T-cell (primary cell): ENCODE measurements at regions of chr3 and their contacts with region 1.

Region 1: DNA sequence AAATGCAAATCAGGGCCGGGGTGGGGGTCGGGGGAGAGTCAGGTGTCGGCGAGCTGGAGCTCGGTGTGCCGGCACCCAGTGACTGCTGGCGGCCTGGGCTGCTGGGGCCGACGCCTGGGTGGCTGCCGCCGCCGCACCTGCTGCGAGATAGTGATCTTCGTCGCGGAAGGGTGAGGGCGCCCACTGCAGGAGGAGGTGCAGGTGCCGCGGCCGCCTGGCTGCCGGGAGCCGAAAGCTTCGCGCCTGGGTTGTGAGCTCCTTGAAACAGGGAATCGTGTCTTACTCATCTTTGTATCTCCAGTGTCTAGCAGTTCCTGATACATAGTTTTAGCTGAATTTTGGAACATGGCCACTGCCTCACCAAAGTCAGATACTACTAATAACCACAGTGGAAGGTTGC is 64.0 kb upstream of the CPOX start:
- DNase-seq: peak in 30 of 35 experiments; percentile 6 to 51 (median 24)
- ATAC-seq: peak; percentile 50 to 92 (median 66)
- H3K4me3 ChIP-seq: no peak overlapping the region
- H3K4me3 Mint-ChIP-seq: peak overlapping the region in 1 of 3 donors; percentile 53
- H3K27ac ChIP-seq: no peak overlapping the region
- H3K27ac Mint-ChIP-seq: no peak overlapping the region
- H3K4me1 ChIP-seq: peaks cover 0 to 3% of the 10 kb centered on the region in 2 experiments
- H3K4me1 Mint-ChIP-seq: peaks cover 3 to 8% (median 5%) of the 10 kb centered on the region in 3 donors
- H3K27me3 ChIP-seq: peaks cover 0 to 6% of the 10 kb centered on the region in 2 experiments
- H3K27me3 Mint-ChIP-seq: peaks cover 17 to 22% of the 10 kb centered on the region in 2 donors

Region 2: GRCh38 chr3:96705895-96706294 is 1951.6 kb before region 1 on chr3:
- CTCF ChIA-PET with region 1: no interaction called
- POLR2A ChIA-PET with region 1: no interaction called
- DNase-seq: no peak
- ATAC-seq: no peak
- H3K4me3 ChIP-seq: no peak overlapping the region
- H3K4me3 Mint-ChIP-seq: no peak overlapping the region
- H3K27ac ChIP-seq: no peak overlapping the region
- H3K27ac Mint-ChIP-seq: no peak overlapping the region
- H3K4me1 ChIP-seq: no peaks in the 10 kb centered on the region
- H3K4me1 Mint-ChIP-seq: no peaks in the 10 kb centered on the region
- H3K27me3 ChIP-seq: no peaks in the 10 kb centered on the region
- H3K27me3 Mint-ChIP-seq: no peaks in the 10 kb centered on the region

Region 3: GRCh38 chr3:98291332-98291957 is 366.0 kb before region 1 on chr3:
- CTCF ChIA-PET with region 1: no interaction called
- POLR2A ChIA-PET with region 1: no interaction called
- DNase-seq: no peak
- ATAC-seq: no peak
- H3K4me3 ChIP-seq: no peak overlapping the region
- H3K4me3 Mint-ChIP-seq: no peak overlapping the region
- H3K27ac ChIP-seq: no peak overlapping the region
- H3K27ac Mint-ChIP-seq: no peak overlapping the region
- H3K4me1 ChIP-seq: no peaks in the 10 kb centered on the region
- H3K4me1 Mint-ChIP-seq: no peaks in the 10 kb centered on the region
- H3K27me3 ChIP-seq: peaks cover 0 to 15% of the 10 kb centered on the region in 2 experiments
- H3K27me3 Mint-ChIP-seq: peaks cover 13 to 20% of the 10 kb centered on the region in 2 donors

Region 4: GRCh38 chr3:98593046-98593936 is 64.2 kb before region 1 on chr3 and contains the start of gene CPOX:
- CTCF ChIA-PET with region 1: interaction called in 1 of 2 experiments, 12 read pairs
- POLR2A ChIA-PET with region 1: no interaction called
- DNase-seq: peak; percentile 59 to 85 (median 75)
- ATAC-seq: peak; percentile 95 to 98 (median 96)
- H3K4me3 ChIP-seq: peak within 1 kb of the TSS; percentile 61 to 84
- H3K4me3 Mint-ChIP-seq: peak within 1 kb of the TSS; percentile 93 to 96 (median 93)
- H3K27ac ChIP-seq: peak within 1 kb of the TSS; percentile 60
- H3K27ac Mint-ChIP-seq: peak within 1 kb of the TSS; percentile 93 to 95
- H3K4me1 ChIP-seq: peaks cover 15 to 17% of the 10 kb centered on the region in 2 experiments
- H3K4me1 Mint-ChIP-seq: peaks cover 32 to 43% (median 38%) of the 10 kb centered on the region in 3 donors
- H3K27me3 ChIP-seq: no peaks in the 10 kb centered on the region
- H3K27me3 Mint-ChIP-seq: no peaks in the 10 kb centered on the region
- total RNA-seq, gene CPOX: 13.9 to 47.6 (median 44.6) TPM

Region 5: GRCh38 chr3:98602078-98602678 is 55.3 kb before region 1 on chr3:
- CTCF ChIA-PET with region 1: interaction called in 1 of 2 experiments, 30 read pairs
- POLR2A ChIA-PET with region 1: no interaction called
- DNase-seq: peak in 6 of 35 experiments; percentile 2 to 51 (median 14)
- ATAC-seq: peak in 3 of 4 experiments; percentile 58 to 70 (median 63)
- H3K4me3 ChIP-seq: no peak overlapping the region
- H3K4me3 Mint-ChIP-seq: no peak overlapping the region
- H3K27ac ChIP-seq: no peak overlapping the region
- H3K27ac Mint-ChIP-seq: no peak overlapping the region
- H3K4me1 ChIP-seq: no peaks in the 10 kb centered on the region
- H3K4me1 Mint-ChIP-seq: no peaks in the 10 kb centered on the region
- H3K27me3 ChIP-seq: peaks cover 0 to 5% of the 10 kb centered on the region in 2 experiments
- H3K27me3 Mint-ChIP-seq: peaks cover 10 to 13% of the 10 kb centered on the region in 2 donors